K562 (cell line): ENCODE measurements at regions of chr19 and their contacts with region 1.

Region 1: GRCh38 chr19:28242297-28242927 is 970.5 kb downstream of the UQCRFS1 start:
- DNase-seq: peak; percentile 61 to 77 (median 71)
- ATAC-seq: peak; percentile 75
- H3K4me3 ChIP-seq: no peak overlapping the region
- H3K27ac ChIP-seq: no peak overlapping the region
- H3K4me1 ChIP-seq: no peaks in the 10 kb centered on the region
- H3K27me3 ChIP-seq: no peaks in the 10 kb centered on the region
- CTCF ChIP-seq: peak; percentile 60 to 74 (median 64)
- EP300 ChIP-seq: no peak
- POLR2A ChIP-seq: no peak
- RAD21 ChIP-seq: peak in 1 of 2 experiments; percentile 65; a peak in 2 of 4 replicates

Region 2: DNA sequence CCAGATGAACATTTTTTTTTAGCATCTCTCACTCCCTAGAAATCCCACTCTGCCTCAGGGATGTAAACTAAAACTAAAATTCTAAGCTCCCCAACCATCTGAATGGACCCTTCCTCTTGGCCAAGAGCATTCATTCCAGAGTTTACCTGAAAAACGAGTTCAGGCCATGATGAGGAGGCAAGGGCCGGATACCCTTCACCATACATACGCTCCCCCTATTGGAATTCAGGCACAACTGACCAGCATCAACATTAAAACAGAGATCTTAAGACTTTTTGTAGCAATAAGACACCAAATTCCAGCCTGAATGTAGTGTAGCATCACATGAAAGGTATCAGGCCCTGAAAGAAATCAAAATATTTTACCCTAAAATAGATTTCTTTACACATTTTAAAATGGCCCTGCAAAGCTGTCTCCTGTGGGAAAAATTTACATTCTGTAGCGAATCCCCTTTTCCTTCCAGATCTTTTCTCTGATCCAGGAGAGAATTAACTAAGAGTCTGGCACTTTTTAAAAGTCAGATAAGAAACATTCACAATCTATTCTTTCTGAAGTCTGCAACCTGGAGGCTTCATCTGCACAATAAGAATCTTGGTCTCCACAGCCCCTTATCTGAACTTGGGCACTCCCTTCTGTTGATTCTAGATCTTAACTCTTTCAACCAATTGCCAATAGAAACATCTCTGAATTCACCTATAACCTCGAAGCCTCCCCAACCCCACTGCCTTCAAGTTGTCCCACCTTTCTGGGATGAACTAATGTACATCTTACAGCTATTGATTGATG is 82.1 kb after region 1 on chr19:
- CTCF ChIA-PET with region 1: no interaction called
- POLR2A ChIA-PET with region 1: no interaction called
- in situ Hi-C with region 1: no loop called
- intact Hi-C with region 1: loop called (anchors 2 kb)
- DNase-seq: no peak
- ATAC-seq: no peak
- H3K4me3 ChIP-seq: no peak overlapping the region
- H3K27ac ChIP-seq: no peak overlapping the region
- H3K4me1 ChIP-seq: no peaks in the 10 kb centered on the region
- H3K27me3 ChIP-seq: no peaks in the 10 kb centered on the region
- CTCF ChIP-seq: no peak
- EP300 ChIP-seq: no peak
- POLR2A ChIP-seq: no peak
- RAD21 ChIP-seq: no peak

Region 3: GRCh38 chr19:28718909-28719308 is 476.5 kb after region 1 on chr19:
- CTCF ChIA-PET with region 1: no interaction called
- POLR2A ChIA-PET with region 1: no interaction called
- in situ Hi-C with region 1: loop called (anchors 25 kb)
- intact Hi-C with region 1: loop called (anchors 2 kb)
- DNase-seq: no peak
- ATAC-seq: no peak
- H3K4me3 ChIP-seq: no peak overlapping the region
- H3K27ac ChIP-seq: no peak overlapping the region
- H3K4me1 ChIP-seq: no peaks in the 10 kb centered on the region
- H3K27me3 ChIP-seq: no peaks in the 10 kb centered on the region
- CTCF ChIP-seq: no peak
- EP300 ChIP-seq: no peak
- POLR2A ChIP-seq: no peak
- RAD21 ChIP-seq: no peak